H1 (cell line): ENCODE measurements at regions of chr5 and their contacts with region 1.

Region 1: DNA sequence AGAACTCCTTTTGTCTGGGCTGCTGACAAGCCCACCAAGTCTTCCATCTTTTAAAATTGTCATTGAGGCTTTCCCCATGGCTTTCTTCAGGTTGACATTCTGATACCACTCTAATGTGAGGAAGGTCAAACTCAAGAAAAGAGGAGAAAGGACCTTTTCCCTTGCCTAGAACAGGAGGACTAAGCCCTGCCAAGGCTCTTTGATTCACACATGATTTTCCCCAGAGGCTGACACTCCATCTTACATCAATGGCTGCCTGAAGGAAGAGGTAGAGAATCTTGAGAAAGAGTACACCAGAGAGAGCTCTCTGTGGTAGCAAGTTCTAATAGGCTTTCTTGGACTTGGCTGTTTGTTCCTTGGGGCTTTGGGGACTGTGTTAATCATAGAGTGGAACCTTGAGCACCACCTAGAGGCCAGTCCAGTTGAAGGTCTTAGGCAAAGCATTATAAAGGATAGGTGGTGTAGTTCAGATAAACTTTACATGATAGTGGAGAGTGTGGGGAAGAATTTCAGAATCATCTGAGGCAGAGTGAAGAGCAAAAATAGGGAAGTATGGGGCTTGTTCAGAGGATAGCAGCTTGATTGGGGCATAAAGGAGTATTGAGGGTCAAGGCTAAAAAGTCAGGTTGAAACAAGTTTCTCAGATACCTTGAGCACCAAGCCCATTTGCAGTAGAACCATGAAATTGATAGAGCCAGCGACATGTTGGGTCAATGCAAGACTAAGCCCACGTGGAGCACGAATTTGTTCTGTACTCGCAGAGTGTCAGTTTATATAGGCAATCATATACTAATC is 36.7 kb downstream of the NDFIP1 start:
- DNase-seq: peak in 1 of 2 experiments; percentile 63
- H3K4me3 ChIP-seq: no peak overlapping the region
- H3K27ac ChIP-seq: no peak overlapping the region
- H3K4me1 ChIP-seq: peaks cover 0 to 3% (median under 1%) of the 10 kb centered on the region in 4 experiments; a peak in 1 of 7 replicates
- H3K27me3 ChIP-seq: no peaks in the 10 kb centered on the region
- CTCF ChIP-seq: peak in 2 of 3 experiments; percentile 76 to 80; a peak in 3 of 4 replicates
- EP300 ChIP-seq: no peak
- POLR2A ChIP-seq: no peak
- RAD21 ChIP-seq: peak; percentile 66 to 76

Region 2: GRCh38 chr5:141992349-141992963 is 152.8 kb before region 1 on chr5:
- CTCF ChIA-PET with region 1: interaction called, 113 read pairs
- POLR2A ChIA-PET with region 1: interaction called, 4 read pairs
- DNase-seq: peak in 1 of 2 experiments; percentile 79
- H3K4me3 ChIP-seq: no peak overlapping the region
- H3K27ac ChIP-seq: no peak overlapping the region
- H3K4me1 ChIP-seq: no peaks in the 10 kb centered on the region
- H3K27me3 ChIP-seq: no peaks in the 10 kb centered on the region
- CTCF ChIP-seq: peak in 2 of 3 experiments; percentile 49 to 69; a peak in 2 of 4 replicates
- EP300 ChIP-seq: no peak
- POLR2A ChIP-seq: no peak
- RAD21 ChIP-seq: peak; percentile 55 to 66

Region 3: GRCh38 chr5:142012792-142013388 is 132.4 kb before region 1 on chr5 and contains the start of gene GNPDA1:
- CTCF ChIA-PET with region 1: interaction called, 112 read pairs
- POLR2A ChIA-PET with region 1: interaction called, 11 read pairs
- DNase-seq: peak; percentile 27 to 76
- H3K4me3 ChIP-seq: peak within 1 kb of the TSS; percentile 56 to 81 (median 68)
- H3K27ac ChIP-seq: peak within 1 kb of the TSS; percentile 59; the same call in 1 of the 2 replicates
- H3K4me1 ChIP-seq: peaks cover 0 to 2% (median 2%) of the 10 kb centered on the region in 4 experiments; a peak in 4 of 7 replicates
- H3K27me3 ChIP-seq: no peaks in the 10 kb centered on the region
- CTCF ChIP-seq: no peak
- EP300 ChIP-seq: no peak
- POLR2A ChIP-seq: peak; percentile 16 to 76; a peak in 2 of 3 replicates
- RAD21 ChIP-seq: no peak
- total RNA-seq, gene GNPDA1: 93.6 and 94.3 TPM in 2 replicates

Region 4: DNA sequence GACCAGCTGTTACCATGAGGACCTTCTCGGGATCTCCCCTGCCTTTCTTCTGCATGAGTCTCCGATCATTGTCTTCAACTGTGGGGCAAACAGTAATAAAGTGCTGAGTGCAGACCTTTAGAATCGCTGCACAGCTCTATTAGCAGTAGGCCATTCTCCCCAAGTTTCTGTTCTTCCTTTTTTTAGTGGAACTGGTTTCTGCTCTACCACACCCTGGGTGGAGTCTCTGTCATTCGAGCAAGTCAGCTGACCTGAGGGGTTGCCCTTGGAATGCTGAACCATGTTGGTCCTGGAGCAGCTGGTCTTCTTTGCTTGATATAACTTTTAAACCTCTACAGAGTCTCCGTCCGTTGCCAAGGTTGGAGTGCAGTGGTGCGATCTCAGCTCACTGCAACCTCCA is 99.1 kb before region 1 on chr5:
- CTCF ChIA-PET with region 1: interaction called, 18 read pairs
- POLR2A ChIA-PET with region 1: no interaction called
- DNase-seq: no peak
- H3K4me3 ChIP-seq: no peak overlapping the region
- H3K27ac ChIP-seq: no peak overlapping the region
- H3K4me1 ChIP-seq: peaks cover 0 to 5% (median under 1%) of the 10 kb centered on the region in 4 experiments; a peak in 2 of 7 replicates
- H3K27me3 ChIP-seq: no peaks in the 10 kb centered on the region
- CTCF ChIP-seq: no peak
- EP300 ChIP-seq: no peak
- POLR2A ChIP-seq: no peak
- RAD21 ChIP-seq: no peak

Region 5: DNA sequence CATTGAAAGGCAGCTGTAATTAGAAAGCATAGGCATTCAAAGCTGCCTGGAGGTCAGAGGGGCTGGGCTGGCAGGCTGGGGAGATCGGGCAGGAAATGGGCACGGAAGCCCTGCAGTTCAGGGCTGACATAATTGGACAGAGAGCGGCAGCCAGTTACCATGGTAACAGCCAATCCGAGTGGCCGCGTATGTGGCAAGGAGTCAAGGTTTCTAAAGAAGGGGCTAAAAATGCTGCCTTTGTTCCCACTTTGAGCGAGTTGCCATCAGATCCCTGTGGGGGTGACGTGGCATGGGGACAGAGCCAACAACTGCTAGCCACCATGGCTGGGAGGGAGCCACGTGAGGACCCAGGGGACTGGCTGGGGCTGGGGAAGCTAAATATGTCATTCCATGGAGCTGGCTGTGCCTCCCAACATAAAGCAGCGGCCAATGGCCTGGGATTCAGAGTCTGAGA is 81.4 kb before region 1 on chr5:
- CTCF ChIA-PET with region 1: interaction called, 21 read pairs
- POLR2A ChIA-PET with region 1: no interaction called
- DNase-seq: peak in 1 of 2 experiments; percentile 72
- H3K4me3 ChIP-seq: peak overlapping the region in 3 of 4 experiments; percentile 18 to 47 (median 30); a peak in 5 of 8 replicates
- H3K27ac ChIP-seq: no peak overlapping the region
- H3K4me1 ChIP-seq: peaks cover 0 to 3% (median 3%) of the 10 kb centered on the region in 4 experiments; a peak in 5 of 7 replicates
- H3K27me3 ChIP-seq: no peaks in the 10 kb centered on the region
- CTCF ChIP-seq: no peak
- EP300 ChIP-seq: no peak
- POLR2A ChIP-seq: no peak
- RAD21 ChIP-seq: no peak

Region 6: GRCh38 chr5:142548739-142549275 is 403.5 kb after region 1 on chr5:
- CTCF ChIA-PET with region 1: interaction called, 10 read pairs
- POLR2A ChIA-PET with region 1: no interaction called
- DNase-seq: peak; percentile 73 to 78
- H3K4me3 ChIP-seq: no peak overlapping the region
- H3K27ac ChIP-seq: no peak overlapping the region
- H3K4me1 ChIP-seq: peaks cover 0 to 8% (median 5%) of the 10 kb centered on the region in 4 experiments; a peak in 6 of 7 replicates
- H3K27me3 ChIP-seq: no peaks in the 10 kb centered on the region
- CTCF ChIP-seq: peak; percentile 31 to 98 (median 94)
- EP300 ChIP-seq: peak in 1 of 2 experiments; percentile 30; a peak in 1 of 3 replicates
- POLR2A ChIP-seq: no peak
- RAD21 ChIP-seq: peak; percentile 99